IMR-90 (cell line): ENCODE measurements at regions of chr12 and their contacts with region 1.

Region 1: DNA sequence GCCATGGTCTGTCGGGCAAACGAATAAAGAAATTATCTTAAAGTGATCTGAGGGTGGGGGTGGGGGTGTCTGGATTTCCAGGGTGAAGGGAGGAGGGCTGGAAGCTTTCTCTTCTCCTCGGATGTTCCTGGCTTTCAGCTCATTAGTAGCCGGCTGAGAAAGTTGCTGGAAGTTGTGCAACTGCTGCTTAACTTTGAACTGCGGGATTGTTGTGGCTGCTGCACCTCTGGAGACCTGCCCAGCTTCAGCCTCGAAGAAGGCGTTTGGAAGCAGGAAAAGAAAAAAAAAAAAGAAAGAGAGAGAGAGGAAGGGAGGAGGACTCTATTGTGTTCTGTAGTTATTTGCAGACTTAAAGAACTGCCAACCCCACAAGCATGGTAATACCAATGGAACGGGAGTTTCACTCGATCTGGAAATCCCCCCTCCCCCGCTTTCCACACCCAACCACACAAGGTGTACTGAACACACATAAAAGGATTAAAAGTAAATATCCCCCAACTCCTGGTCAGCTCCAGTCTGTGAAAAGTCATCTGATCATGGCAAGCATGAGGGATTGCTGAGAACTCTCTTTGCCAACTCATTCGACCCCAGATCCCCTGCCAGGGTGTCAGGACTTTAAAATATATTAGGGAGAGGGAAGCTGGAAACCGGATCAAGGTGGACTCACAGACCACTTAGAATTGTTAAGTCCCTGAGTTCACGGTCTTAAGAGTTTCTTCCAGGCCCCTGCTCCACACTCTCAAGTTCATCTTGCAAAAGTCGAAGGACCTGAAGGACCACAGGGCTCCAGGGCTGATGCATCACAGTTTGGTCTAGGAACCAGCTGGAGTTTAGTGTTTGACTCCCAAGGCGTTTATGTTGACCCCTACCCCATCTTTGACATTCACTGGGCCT is at the start of gene RASSF9:
- DNase-seq: peak; percentile 43
- ATAC-seq: peak; percentile 44; the same call in 1 of the 2 replicates
- H3K4me3 ChIP-seq: no peak within 1 kb of the TSS
- H3K27ac ChIP-seq: no peak within 1 kb of the TSS
- H3K4me1 ChIP-seq: no peaks in the 10 kb centered on the region
- H3K27me3 ChIP-seq: no peaks in the 10 kb centered on the region
- CTCF ChIP-seq: no peak
- POLR2A ChIP-seq: no peak
- RAD21 ChIP-seq: no peak
- total RNA-seq, gene RASSF9: 0.18 and 0.28 TPM in 2 replicates

Region 2: GRCh38 chr12:85866986-85867776 is 30.7 kb after region 1 on chr12:
- CTCF ChIA-PET with region 1: interaction called, 10 read pairs
- POLR2A ChIA-PET with region 1: no interaction called
- dilution Hi-C with region 1: no loop called
- in situ Hi-C with region 1: no loop called
- intact Hi-C with region 1: no loop called
- DNase-seq: peak; percentile 61
- ATAC-seq: peak; percentile 92
- H3K4me3 ChIP-seq: no peak overlapping the region
- H3K27ac ChIP-seq: no peak overlapping the region
- H3K4me1 ChIP-seq: no peaks in the 10 kb centered on the region
- H3K27me3 ChIP-seq: no peaks in the 10 kb centered on the region
- CTCF ChIP-seq: peak; percentile 79
- POLR2A ChIP-seq: no peak
- RAD21 ChIP-seq: peak; percentile 79